ENCODE measurements at regions of chr17 and their contacts with region 1.

Region 1: GRCh38 chr17:7306911-7307686 is at the start of gene EIF5A:
- DNase-seq: peak; percentile 98 to 100 (median 100)
- ATAC-seq: peak; percentile 68 to 70
- H3K4me3 Mint-ChIP-seq: peak within 1 kb of the TSS; percentile 90 to 99 (median 96)
- H3K27ac Mint-ChIP-seq: peak within 1 kb of the TSS; percentile 96 to 100 (median 99)
- H3K4me1 Mint-ChIP-seq: peaks cover 23 to 40% (median 37%) of the 10 kb centered on the region in 4 donors
- H3K27me3 Mint-ChIP-seq: peaks cover 0 to 4% (median 0%) of the 10 kb centered on the region in 5 donors
- polyA plus RNA-seq, gene EIF5A: 209 to 690 (median 643) TPM

Region 2: DNA sequence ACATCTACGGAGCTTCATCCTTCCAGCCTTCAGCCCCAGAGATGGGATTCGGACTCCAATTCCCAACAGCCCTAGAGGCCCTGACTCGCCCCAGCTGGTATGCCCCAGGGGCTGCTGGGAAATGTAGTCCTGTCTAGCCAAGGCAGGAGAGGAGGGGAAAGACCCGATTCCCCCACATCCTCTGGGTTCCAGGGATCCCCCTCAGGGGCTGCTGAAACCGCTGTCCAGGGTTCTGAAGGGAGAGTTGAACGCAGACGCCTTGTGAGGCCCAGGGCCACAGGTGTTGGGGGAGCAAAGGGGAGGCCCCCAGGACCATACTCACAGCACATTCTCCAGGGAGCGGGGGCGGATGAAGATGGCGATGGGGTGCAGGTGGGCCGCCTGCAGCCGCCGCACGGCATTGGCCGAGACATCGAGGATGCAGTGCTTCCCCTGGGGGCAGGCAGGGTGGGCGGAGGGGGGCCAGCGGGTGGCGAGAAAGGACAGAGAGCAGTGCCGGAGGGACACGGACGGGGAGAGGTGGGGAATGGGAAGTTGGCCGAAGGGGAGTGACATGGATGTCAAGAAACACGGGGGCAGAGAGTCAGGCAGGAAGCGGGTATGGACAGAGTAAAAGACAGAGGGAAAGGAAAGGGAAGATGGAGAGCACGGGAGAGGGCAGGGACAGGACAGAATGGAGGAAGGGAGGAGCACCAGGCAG is 115.4 kb before region 1 on chr17:
- POLR2A ChIA-PET with region 1: no interaction called
- DNase-seq: peak in 1 of 10 donors; percentile 59
- ATAC-seq: peak; percentile 49
- H3K4me3 Mint-ChIP-seq: no peak overlapping the region
- H3K27ac Mint-ChIP-seq: no peak overlapping the region
- H3K4me1 Mint-ChIP-seq: peaks cover 0 to 4% (median under 1%) of the 10 kb centered on the region in 4 donors
- H3K27me3 Mint-ChIP-seq: no peaks in the 10 kb centered on the region

Region 3: GRCh38 chr17:7296189-7296902 is 10.8 kb before region 1 on chr17:
- POLR2A ChIA-PET with region 1: interaction called, 12 read pairs
- DNase-seq: peak; percentile 30 to 74 (median 58)
- ATAC-seq: peak; percentile 11 to 21
- H3K4me3 Mint-ChIP-seq: peak overlapping the region; percentile 16 to 96 (median 83)
- H3K27ac Mint-ChIP-seq: peak overlapping the region in 2 of 10 donors; percentile 46 to 67
- H3K4me1 Mint-ChIP-seq: peaks cover 10 to 24% (median 20%) of the 10 kb centered on the region in 4 donors
- H3K27me3 Mint-ChIP-seq: peaks cover 0 to 19% (median 7%) of the 10 kb centered on the region in 5 donors

Region 4: GRCh38 chr17:7323731-7324437 is 16.8 kb after region 1 on chr17:
- POLR2A ChIA-PET with region 1: interaction called, 168 read pairs
- DNase-seq: peak in 9 of 10 donors; percentile 34 to 77 (median 62)
- ATAC-seq: peak; percentile 41 to 53
- H3K4me3 Mint-ChIP-seq: no peak overlapping the region
- H3K27ac Mint-ChIP-seq: peak overlapping the region in 4 of 10 donors; percentile 31 to 65 (median 50)
- H3K4me1 Mint-ChIP-seq: peaks cover 17 to 31% (median 19%) of the 10 kb centered on the region in 4 donors
- H3K27me3 Mint-ChIP-seq: no peaks in the 10 kb centered on the region